PC-3 (cell line): ENCODE measurements at regions of chr11 and their contacts with region 1.

Region 1: GRCh38 chr11:12043959-12044819 is 35.8 kb upstream of the DKK3 start:
- DNase-seq: peak; percentile 96
- ATAC-seq: peak; percentile 72
- H3K4me3 ChIP-seq: peak overlapping the region; percentile 48
- H3K27ac ChIP-seq: peak overlapping the region; percentile 95
- H3K4me1 ChIP-seq: peaks cover 45% of the 10 kb centered on the region
- H3K27me3 ChIP-seq: no peaks in the 10 kb centered on the region
- CTCF ChIP-seq: peak; percentile 95

Region 2: DNA sequence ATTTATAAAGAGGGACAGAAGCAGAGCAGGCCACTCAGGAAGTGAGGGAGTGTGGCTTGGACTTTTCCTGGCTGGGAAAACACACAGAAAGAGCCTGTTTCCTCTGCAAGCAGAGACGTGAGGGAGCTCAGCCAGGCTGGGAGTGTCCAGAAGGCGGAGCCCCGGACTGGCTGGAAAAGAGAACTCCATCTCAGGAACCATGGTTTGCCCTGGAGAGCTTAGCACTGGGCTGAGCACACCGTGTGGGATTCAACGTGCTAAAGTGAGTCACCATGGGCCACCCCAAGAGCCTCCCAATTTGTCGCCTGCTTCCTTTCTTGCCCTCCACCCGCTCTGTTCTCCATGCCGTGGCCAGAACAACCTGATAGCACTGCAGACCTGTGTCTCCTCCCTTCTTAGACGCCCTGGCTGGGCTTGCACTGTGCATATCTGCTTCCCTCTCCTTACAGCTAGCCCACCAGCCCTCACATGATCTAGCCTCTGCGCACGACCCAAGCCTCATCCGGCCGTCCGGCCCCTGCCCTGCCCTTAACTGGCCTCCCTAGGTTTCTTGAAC is 474.2 kb before region 1 on chr11:
- CTCF ChIA-PET with region 1: no interaction called
- POLR2A ChIA-PET with region 1: no interaction called
- intact Hi-C with region 1: no loop called
- DNase-seq: peak; percentile 13
- ATAC-seq: peak; percentile 48
- H3K4me3 ChIP-seq: no peak overlapping the region
- H3K27ac ChIP-seq: no peak overlapping the region
- H3K4me1 ChIP-seq: peaks cover 23% of the 10 kb centered on the region
- H3K27me3 ChIP-seq: no peaks in the 10 kb centered on the region
- CTCF ChIP-seq: no peak

Region 3: GRCh38 chr11:11787305-11788062 is 256.7 kb before region 1 on chr11:
- CTCF ChIA-PET with region 1: interaction called, 5 read pairs
- POLR2A ChIA-PET with region 1: no interaction called
- intact Hi-C with region 1: loop called (anchors 2 kb)
- DNase-seq: peak; percentile 85
- ATAC-seq: peak; percentile 97
- H3K4me3 ChIP-seq: no peak overlapping the region
- H3K27ac ChIP-seq: no peak overlapping the region
- H3K4me1 ChIP-seq: no peaks in the 10 kb centered on the region
- H3K27me3 ChIP-seq: no peaks in the 10 kb centered on the region
- CTCF ChIP-seq: peak; percentile 91

Region 4: GRCh38 chr11:11841723-11842420 is 202.3 kb before region 1 on chr11 and contains the start of gene USP47:
- CTCF ChIA-PET with region 1: no interaction called
- POLR2A ChIA-PET with region 1: no interaction called
- intact Hi-C with region 1: loop called (anchors 1 kb)
- DNase-seq: peak; percentile 79
- ATAC-seq: peak; percentile 68
- H3K4me3 ChIP-seq: peak within 1 kb of the TSS; percentile 95
- H3K27ac ChIP-seq: peak within 1 kb of the TSS; percentile 72
- H3K4me1 ChIP-seq: peaks cover 33% of the 10 kb centered on the region
- H3K27me3 ChIP-seq: no peaks in the 10 kb centered on the region
- CTCF ChIP-seq: peak; percentile 54
- total RNA-seq, gene USP47: 33.5 and 45.2 TPM in 2 replicates

Region 5: DNA sequence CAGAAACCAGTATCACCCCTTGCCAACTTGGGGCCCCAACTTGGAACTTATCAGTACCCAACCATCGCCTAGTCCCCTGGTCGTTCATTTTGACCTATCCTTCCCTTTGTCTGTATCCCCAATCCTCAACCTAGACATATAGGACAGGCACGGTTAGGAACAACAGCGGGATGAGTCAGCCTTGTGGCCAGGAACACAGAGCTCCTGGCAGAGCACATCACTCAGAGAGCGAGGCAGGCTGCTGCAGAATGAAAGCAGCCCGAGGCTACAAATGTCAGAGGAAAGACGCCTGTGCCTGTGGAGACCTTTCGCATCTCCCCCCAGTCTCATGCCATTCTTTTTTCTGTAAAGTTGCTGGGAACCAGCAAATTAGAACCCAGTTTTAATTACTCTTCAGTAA is 50.4 kb before region 1 on chr11:
- CTCF ChIA-PET with region 1: no interaction called
- POLR2A ChIA-PET with region 1: no interaction called
- intact Hi-C with region 1: loop called (anchors 5 kb)
- DNase-seq: peak; percentile 90
- ATAC-seq: peak; percentile 94
- H3K4me3 ChIP-seq: peak overlapping the region; percentile 33; the same call in 1 of the 2 replicates
- H3K27ac ChIP-seq: peak overlapping the region; percentile 43
- H3K4me1 ChIP-seq: peaks cover 47% of the 10 kb centered on the region
- H3K27me3 ChIP-seq: no peaks in the 10 kb centered on the region
- CTCF ChIP-seq: no peak

Region 6: GRCh38 chr11:12159351-12160099 is 115.3 kb after region 1 on chr11:
- CTCF ChIA-PET with region 1: no interaction called
- POLR2A ChIA-PET with region 1: no interaction called
- intact Hi-C with region 1: loop called (anchors 5 kb)
- DNase-seq: peak; percentile 69
- ATAC-seq: peak; percentile 69
- H3K4me3 ChIP-seq: no peak overlapping the region
- H3K27ac ChIP-seq: peak overlapping the region; percentile 48
- H3K4me1 ChIP-seq: peaks cover 43% of the 10 kb centered on the region
- H3K27me3 ChIP-seq: no peaks in the 10 kb centered on the region
- CTCF ChIP-seq: peak; percentile 32; the same call in 1 of the 2 replicates

Region 7: DNA sequence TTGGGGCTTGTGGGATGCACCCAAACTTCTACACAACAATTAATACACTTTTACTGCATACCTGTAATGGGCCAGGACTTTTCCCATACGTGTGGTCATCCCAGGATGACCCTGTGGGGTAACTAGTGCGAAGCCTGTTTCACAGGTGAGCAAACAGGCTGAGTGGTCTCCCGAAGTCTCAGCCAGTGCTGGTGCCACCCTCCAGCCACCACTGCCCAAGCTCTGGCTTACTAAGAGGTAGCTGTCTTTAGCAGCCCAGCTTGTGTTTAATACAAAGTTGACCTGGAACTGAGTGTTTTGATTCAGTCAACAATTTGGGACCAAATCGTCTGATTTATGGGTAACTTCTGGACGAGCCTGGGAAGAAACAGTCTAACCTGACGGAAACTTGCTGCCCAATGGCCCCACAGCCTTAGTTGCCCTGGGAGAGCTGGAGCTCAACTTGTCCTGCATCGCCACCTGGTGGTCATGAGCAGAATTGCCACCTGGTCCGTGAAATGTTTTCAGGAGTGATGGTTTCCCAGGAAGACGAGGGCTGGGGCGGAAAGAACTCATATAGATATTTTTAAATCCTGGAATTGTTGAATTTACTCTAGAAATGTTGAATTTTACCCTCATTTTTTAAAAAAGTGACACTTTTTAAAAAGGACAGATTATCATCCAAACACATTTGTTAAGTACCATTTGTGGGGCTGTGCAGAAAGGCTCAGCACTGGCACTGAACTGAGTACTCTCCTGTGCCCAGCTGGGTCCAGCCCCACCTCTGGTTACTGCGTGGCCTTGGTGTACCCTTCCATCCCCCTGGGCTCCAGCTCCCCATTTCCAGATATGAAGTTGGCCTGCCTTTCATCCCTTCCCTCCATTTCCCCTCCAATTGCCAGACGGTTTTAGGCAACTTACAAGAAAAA is 237.6 kb after region 1 on chr11:
- CTCF ChIA-PET with region 1: interaction called, 3 read pairs
- POLR2A ChIA-PET with region 1: no interaction called
- intact Hi-C with region 1: loop called (anchors 1 kb)
- DNase-seq: peak; percentile 87
- ATAC-seq: peak; percentile 49
- H3K4me3 ChIP-seq: no peak overlapping the region
- H3K27ac ChIP-seq: 0 out of 2 replicates have a peak overlapping the region, but pooled peaks have one; percentile 5
- H3K4me1 ChIP-seq: peaks cover 53% of the 10 kb centered on the region
- H3K27me3 ChIP-seq: no peaks in the 10 kb centered on the region
- CTCF ChIP-seq: peak; percentile 97